HepG2 (cell line): ENCODE measurements at regions of chr12 and their contacts with region 1.

Region 1: DNA sequence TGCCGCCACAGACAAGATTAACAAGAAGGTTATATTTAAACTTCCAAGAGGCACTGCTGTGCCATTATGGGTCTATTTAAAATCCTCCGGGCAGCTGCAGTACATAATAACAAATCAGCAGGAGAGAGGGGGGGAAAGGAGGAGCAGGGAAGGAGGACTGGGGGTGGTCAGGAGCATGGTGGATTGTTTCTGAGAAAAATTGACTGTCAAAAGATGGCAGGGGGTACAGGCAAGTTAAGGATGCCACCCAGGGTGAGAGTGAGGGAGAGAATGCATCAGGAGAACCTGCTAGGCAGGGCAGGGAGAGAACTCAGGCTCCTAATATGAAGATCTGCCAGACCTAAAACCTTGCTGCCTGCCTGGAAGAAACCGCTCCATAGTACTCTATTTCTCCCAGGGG is 181.8 kb downstream of the GRIN2B start:
- DNase-seq: no peak
- ATAC-seq: no peak
- H3K4me3 ChIP-seq: no peak overlapping the region
- H3K27ac ChIP-seq: no peak overlapping the region
- H3K4me1 ChIP-seq: no peaks in the 10 kb centered on the region
- H3K27me3 ChIP-seq: no peaks in the 10 kb centered on the region
- CTCF ChIP-seq: no peak
- EP300 ChIP-seq: no peak
- POLR2A ChIP-seq: no peak
- RAD21 ChIP-seq: no peak

Region 2: GRCh38 chr12:13135371-13136178 is 664.0 kb before region 1 on chr12:
- CTCF ChIA-PET with region 1: no interaction called
- POLR2A ChIA-PET with region 1: no interaction called
- in situ Hi-C with region 1: no loop called
- intact Hi-C with region 1: loop called (anchors 10 kb)
- DNase-seq: no peak
- ATAC-seq: no peak
- H3K4me3 ChIP-seq: no peak overlapping the region
- H3K27ac ChIP-seq: no peak overlapping the region
- H3K4me1 ChIP-seq: no peaks in the 10 kb centered on the region
- H3K27me3 ChIP-seq: peaks cover 0 to 3% of the 10 kb centered on the region in 2 experiments; a peak in 1 of 5 replicates
- CTCF ChIP-seq: no peak
- EP300 ChIP-seq: no peak
- POLR2A ChIP-seq: no peak
- RAD21 ChIP-seq: no peak

Region 3: DNA sequence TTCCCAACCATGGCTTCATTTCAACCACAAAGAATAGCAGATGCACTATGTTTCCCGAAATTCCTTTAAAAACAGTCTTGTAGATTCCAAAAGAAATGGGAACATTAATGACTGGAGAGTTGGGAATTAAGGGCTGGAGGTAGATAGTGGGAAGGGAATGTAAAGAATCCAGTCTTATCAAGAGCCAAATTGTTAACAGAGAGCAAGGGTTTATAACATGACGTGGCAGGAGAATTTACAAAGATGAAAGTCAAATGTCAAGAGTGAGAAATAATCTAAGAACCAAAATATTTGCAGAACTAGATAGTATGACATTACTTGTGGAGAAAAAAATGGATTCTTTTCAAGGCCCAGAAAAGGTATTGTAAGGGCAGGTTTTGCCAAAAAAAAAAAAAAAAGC is 19.1 kb before region 1 on chr12:
- CTCF ChIA-PET with region 1: no interaction called
- POLR2A ChIA-PET with region 1: no interaction called
- in situ Hi-C with region 1: no loop called
- intact Hi-C with region 1: no loop called
- DNase-seq: no peak
- ATAC-seq: no peak
- H3K4me3 ChIP-seq: no peak overlapping the region
- H3K27ac ChIP-seq: no peak overlapping the region
- H3K4me1 ChIP-seq: no peaks in the 10 kb centered on the region
- H3K27me3 ChIP-seq: no peaks in the 10 kb centered on the region
- CTCF ChIP-seq: no peak
- EP300 ChIP-seq: no peak
- POLR2A ChIP-seq: no peak
- RAD21 ChIP-seq: no peak